Transverse colon (tissue), 4 donors: ENCODE measurements at regions of chr12 and their contacts with region 1.

Region 1: GRCh38 chr12:92505254-92506231 is 197.2 kb upstream of the PLEKHG7 start:
- DNase-seq: peak; percentile 69
- H3K4me3 ChIP-seq: peak overlapping the region in 1 of 4 donors; percentile 20
- H3K27ac ChIP-seq: peak overlapping the region; percentile 63 to 82 (median 78)
- H3K4me1 ChIP-seq: peaks cover 25 to 45% (median 32%) of the 10 kb centered on the region in 4 donors
- H3K27me3 ChIP-seq: no peaks in the 10 kb centered on the region
- CTCF ChIP-seq: no peak
- EP300 ChIP-seq: no peak
- POLR2A ChIP-seq: no peak

Region 2: GRCh38 chr12:91801048-91801447 is 704.5 kb before region 1 on chr12:
- in situ Hi-C with region 1: no loop called
- intact Hi-C with region 1: no loop called
- DNase-seq: no peak
- H3K4me3 ChIP-seq: no peak overlapping the region
- H3K27ac ChIP-seq: no peak overlapping the region
- H3K4me1 ChIP-seq: no peaks in the 10 kb centered on the region
- H3K27me3 ChIP-seq: no peaks in the 10 kb centered on the region
- CTCF ChIP-seq: no peak
- EP300 ChIP-seq: no peak
- POLR2A ChIP-seq: no peak

Region 3: GRCh38 chr12:92551853-92552397 is 46.4 kb after region 1 on chr12:
- in situ Hi-C with region 1: no loop called
- intact Hi-C with region 1: no loop called
- DNase-seq: no peak
- H3K4me3 ChIP-seq: no peak overlapping the region
- H3K27ac ChIP-seq: peak overlapping the region in 2 of 4 donors; percentile 7 to 14
- H3K4me1 ChIP-seq: peaks cover 0 to 50% (median 19%) of the 10 kb centered on the region in 4 donors
- H3K27me3 ChIP-seq: no peaks in the 10 kb centered on the region
- CTCF ChIP-seq: no peak
- EP300 ChIP-seq: no peak
- POLR2A ChIP-seq: no peak

Region 4: DNA sequence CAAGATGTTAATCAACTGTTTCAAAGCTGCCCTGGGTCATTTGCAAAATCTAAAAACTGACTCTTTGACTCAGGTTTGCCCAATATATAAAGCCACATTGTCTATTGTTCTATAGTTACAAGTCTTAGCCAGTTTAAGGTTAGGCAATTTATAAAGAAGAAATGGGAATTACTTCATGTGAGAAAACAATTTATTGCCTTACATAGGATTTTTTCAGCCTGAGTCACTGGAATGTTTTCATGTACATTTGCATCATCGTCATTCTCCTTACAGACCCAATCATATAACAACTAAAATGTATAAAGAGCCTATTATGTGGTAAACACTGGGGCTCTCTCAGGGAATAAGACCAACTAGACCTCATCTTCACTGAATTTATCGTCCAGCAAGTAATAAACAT is 96.9 kb after region 1 on chr12:
- in situ Hi-C with region 1: no loop called
- intact Hi-C with region 1: loop called (anchors 5 kb)
- DNase-seq: no peak
- H3K4me3 ChIP-seq: no peak overlapping the region
- H3K27ac ChIP-seq: no peak overlapping the region
- H3K4me1 ChIP-seq: peaks cover 0 to 4% (median 0%) of the 10 kb centered on the region in 4 donors
- H3K27me3 ChIP-seq: no peaks in the 10 kb centered on the region
- CTCF ChIP-seq: no peak
- EP300 ChIP-seq: no peak
- POLR2A ChIP-seq: no peak

Region 5: GRCh38 chr12:92639017-92639416 is 133.5 kb after region 1 on chr12:
- in situ Hi-C with region 1: no loop called
- intact Hi-C with region 1: no loop called
- DNase-seq: no peak
- H3K4me3 ChIP-seq: no peak overlapping the region
- H3K27ac ChIP-seq: no peak overlapping the region
- H3K4me1 ChIP-seq: no peaks in the 10 kb centered on the region
- H3K27me3 ChIP-seq: no peaks in the 10 kb centered on the region
- CTCF ChIP-seq: no peak
- EP300 ChIP-seq: no peak
- POLR2A ChIP-seq: no peak

Region 6: DNA sequence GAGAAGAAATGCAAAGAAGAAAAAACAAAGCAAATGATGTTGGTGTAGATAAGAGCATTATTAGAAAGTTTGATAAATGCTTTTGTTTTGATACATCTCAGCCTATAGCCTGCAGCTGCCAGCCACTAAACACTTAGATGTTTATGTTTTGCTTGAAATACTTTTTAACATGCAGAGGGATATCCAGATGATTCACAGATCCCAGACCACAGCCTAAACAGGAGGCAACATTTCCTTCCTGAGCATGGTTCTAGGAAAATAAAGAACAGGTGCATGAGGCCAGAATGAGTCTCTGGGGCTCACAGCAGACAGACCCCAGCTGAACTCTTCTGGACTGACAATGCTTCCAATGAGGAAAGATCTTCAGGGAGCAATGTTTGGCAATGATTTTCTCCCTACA is 527.2 kb after region 1 on chr12:
- in situ Hi-C with region 1: no loop called
- intact Hi-C with region 1: no loop called
- DNase-seq: no peak
- H3K4me3 ChIP-seq: no peak overlapping the region
- H3K27ac ChIP-seq: no peak overlapping the region
- H3K4me1 ChIP-seq: no peaks in the 10 kb centered on the region
- H3K27me3 ChIP-seq: no peaks in the 10 kb centered on the region
- CTCF ChIP-seq: no peak
- EP300 ChIP-seq: no peak
- POLR2A ChIP-seq: no peak